Left cardiac atrium (tissue), 4 donors: ENCODE measurements at regions of chr1 and their contacts with region 1.

Region 1: DNA sequence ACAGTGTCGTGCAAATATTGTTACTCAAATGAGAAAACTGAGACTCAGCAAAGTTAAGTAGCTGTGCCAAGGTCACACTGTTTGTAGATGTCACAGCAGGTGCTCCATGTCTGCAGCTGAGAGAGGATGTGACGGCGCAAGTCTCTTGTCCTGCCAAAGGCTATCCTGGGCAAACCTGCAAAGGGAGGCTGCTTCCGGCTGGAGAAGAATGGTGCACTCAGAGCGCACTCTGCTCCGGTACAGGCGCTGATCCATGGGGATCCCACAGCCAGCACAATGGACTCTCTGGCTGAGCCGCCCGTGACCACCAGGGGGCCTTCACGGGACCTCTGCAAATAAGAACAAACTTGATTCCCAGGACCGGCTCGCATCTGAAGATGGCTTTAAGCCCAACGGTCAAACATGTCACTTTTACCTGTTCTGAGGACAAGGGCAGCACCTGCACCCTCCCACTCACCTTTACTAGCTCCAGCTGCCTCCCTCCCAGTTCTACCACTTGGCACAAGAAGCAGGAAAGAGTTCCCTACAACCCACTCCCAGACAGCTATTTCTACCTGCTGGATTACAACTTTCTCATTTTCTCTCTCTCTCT is 21.9 kb downstream of the RD3 start:
- DNase-seq: peak; percentile 82
- ATAC-seq: peak; percentile 91 to 95

Region 2: DNA sequence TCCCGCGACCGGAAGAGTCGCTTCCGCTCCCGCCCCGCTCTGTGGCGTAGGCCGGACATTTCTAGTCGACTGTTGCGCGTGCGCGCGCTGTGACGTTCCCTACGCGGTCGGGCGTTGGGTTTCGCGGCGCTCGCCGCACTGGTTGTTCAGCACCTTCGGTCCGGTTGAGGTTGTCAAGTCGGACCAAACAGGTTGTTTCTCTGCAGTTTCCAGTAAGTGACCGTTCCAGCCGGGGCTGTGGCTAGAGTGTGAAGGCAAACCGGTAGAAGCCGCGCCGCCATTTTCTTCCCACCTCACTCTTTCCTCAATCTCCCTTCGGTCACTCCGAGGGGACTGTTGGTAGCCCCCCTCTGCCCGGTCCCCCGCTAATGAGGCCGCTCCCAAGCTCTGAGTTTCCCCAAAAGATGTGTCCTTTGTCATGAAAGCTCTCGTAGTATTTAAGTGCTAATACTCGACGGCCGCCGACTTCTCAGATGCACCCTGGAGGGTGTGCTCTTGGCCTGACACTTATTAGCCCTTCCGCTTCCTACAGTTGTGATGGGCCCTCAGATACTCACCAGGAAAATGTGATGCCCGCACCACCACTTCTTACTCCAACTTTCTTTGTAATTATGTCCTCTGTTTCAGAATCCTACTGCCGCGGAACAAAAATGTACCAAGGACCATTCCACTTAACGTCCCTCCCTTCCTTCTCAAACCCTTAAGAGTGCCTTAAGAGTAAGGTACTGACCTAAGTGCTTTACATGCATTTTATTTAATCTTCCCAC is 87.1 kb before region 1 on chr1:
- intact Hi-C with region 1: no loop called
- DNase-seq: peak; percentile 97
- ATAC-seq: peak; percentile 100

Region 3: DNA sequence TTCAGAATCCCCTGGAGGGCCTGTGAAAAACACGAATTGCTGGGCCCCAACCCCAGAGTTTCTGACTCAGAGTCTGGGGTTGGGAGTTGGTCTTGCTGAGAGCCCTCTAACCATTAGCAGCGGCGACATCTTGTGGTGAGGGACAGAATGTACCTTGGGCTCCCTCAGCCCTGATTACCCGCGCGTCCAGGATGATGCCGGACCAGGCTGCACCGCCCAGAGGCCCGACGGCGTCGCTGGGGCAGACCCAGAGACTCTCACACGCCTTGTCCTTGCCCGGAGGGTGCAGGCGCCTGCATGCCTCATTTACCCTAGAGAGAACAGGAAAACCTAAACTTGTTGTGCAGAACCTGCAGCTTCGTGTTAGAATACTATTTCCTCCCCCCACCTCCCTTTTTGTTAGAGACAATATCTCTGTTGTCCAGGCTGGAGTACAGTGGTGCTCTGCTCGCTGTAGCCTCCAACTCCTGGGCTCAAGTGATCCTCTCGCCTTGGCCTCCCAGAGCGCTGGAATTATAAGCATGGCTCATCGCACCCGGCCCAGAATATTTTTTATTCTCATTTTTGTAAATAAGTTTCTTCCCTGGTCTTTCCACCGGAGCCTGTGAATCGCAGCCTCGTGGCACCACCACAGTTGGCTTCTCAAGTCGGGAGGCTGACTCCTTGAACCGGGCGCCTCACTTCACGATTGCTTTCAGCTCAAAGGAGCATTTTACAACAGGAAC is 44.2 kb after region 1 on chr1:
- intact Hi-C with region 1: loop called in 1 of 2 experiments (anchors 2 kb)
- DNase-seq: peak; percentile 81
- ATAC-seq: peak; percentile 84 to 88

Region 4: GRCh38 chr1:211589782-211590721 is 120.0 kb after region 1 on chr1:
- intact Hi-C with region 1: no loop called
- DNase-seq: peak; percentile 75
- ATAC-seq: peak; percentile 79 to 90

Region 5: GRCh38 chr1:211654838-211655787 is 185.1 kb after region 1 on chr1:
- intact Hi-C with region 1: loop called in 1 of 2 experiments (anchors 2 kb)
- DNase-seq: peak; percentile 89
- ATAC-seq: peak; percentile 95 to 96